Adrenal gland (tissue), 19 donors: ENCODE measurements at regions of chr5 and their contacts with region 1.

Region 1: GRCh38 chr5:134577796-134578363 is 52.4 kb downstream of the JADE2 start:
- DNase-seq: peak; percentile 76 to 92 (median 88)
- H3K4me3 ChIP-seq: no peak overlapping the region
- H3K27ac ChIP-seq: peak overlapping the region in 4 of 5 donors; percentile 22 to 91 (median 77)
- H3K4me1 ChIP-seq: peaks cover 14 to 51% of the 10 kb centered on the region in 2 donors
- H3K27me3 ChIP-seq: no peaks in the 10 kb centered on the region
- CTCF ChIP-seq: peak; percentile 78 to 87 (median 85)
- POLR2A ChIP-seq: no peak

Region 2: DNA sequence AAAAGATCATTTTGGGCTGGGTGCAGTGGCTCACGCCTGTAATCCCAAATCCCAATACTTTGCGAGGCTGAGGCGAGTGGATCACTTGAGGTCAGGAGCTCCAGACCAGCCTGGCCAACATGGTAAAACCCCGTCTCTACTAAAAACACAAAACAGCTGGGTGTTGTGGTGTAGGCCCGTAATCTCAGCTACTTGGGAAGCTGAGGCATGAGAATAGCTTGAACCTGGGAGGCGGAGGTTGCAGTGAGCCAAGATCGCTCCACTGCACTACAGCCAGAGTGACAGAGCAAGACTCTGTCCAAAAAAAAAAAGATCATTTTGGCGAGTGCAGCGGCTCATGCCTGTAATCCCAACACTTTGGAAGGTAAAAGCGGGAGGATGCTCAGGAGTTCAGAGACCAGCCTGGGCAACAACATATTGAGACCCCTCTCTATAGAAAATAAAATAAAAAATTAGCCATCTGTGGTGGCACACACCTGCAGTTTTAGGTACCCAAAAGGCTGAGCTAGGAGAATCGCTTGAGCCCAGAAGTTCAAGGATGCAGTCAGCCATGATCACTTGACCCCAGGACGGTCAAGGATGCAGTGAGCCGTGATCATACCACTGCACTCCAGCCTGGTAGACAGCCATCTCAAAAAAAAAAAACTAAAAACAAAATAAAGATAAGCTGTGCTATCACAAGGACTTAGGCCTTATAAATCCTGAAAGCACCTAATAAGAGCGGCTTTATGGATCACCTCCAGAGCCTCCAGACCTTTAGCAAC is 368.2 kb before region 1 on chr5:
- intact Hi-C with region 1: no loop called
- DNase-seq: peak in 1 of 7 donors; percentile 35
- H3K4me3 ChIP-seq: no peak overlapping the region
- H3K27ac ChIP-seq: peak overlapping the region in 1 of 5 donors; percentile 0
- H3K4me1 ChIP-seq: peaks cover 0 to 73% of the 10 kb centered on the region in 2 donors
- H3K27me3 ChIP-seq: no peaks in the 10 kb centered on the region
- CTCF ChIP-seq: no peak
- POLR2A ChIP-seq: no peak

Region 3: DNA sequence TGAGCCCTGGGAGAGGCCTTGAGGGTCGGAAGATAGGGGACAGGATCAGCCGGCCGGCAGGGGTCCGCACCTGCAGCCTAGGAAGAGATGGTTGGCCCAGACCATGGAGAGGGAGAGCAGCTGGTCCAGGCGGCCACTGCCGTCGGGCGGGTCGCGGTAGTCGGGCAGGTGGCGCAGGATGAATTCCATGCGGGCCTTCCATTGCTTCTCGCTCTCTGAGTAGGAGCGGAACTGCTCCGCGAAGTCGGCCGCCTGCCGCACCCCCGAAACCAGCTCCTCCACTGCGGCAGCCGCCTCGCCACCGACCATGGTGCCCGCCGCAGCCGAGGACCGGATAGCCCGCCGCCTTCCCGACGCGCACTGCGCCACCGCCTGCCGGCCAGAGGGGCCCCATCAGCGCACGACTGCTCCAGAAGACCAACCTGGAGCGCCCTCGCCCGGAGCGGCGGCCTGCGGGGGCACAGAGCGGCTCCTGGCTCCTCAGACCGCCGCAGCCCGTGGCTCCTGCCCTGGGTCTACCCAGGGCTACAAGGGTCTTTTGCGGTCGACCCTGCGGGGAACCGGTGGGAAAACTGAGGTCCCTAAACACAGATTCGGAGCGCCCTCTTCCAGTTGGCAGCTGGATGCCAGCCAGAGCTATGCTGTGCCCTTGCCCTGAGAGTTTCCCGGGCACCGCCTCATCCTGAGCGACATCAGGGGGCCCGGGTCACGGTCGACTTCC is 166.2 kb before region 1 on chr5 and contains the start of gene CDKN2AIPNL:
- intact Hi-C with region 1: loop called in 1 of 2 experiments (anchors 10 kb)
- DNase-seq: peak; percentile 89 to 93 (median 90)
- H3K4me3 ChIP-seq: peak within 1 kb of the TSS; percentile 16 to 90 (median 65)
- H3K27ac ChIP-seq: peak within 1 kb of the TSS; percentile 7 to 86 (median 66)
- H3K4me1 ChIP-seq: peaks cover 13 to 16% of the 10 kb centered on the region in 2 donors
- H3K27me3 ChIP-seq: no peaks in the 10 kb centered on the region
- CTCF ChIP-seq: peak; percentile 53 to 93 (median 72)
- POLR2A ChIP-seq: peak; percentile 38 to 48
- total RNA-seq, gene CDKN2AIPNL: 14.1 to 34.3 (median 29.0) TPM

Region 4: DNA sequence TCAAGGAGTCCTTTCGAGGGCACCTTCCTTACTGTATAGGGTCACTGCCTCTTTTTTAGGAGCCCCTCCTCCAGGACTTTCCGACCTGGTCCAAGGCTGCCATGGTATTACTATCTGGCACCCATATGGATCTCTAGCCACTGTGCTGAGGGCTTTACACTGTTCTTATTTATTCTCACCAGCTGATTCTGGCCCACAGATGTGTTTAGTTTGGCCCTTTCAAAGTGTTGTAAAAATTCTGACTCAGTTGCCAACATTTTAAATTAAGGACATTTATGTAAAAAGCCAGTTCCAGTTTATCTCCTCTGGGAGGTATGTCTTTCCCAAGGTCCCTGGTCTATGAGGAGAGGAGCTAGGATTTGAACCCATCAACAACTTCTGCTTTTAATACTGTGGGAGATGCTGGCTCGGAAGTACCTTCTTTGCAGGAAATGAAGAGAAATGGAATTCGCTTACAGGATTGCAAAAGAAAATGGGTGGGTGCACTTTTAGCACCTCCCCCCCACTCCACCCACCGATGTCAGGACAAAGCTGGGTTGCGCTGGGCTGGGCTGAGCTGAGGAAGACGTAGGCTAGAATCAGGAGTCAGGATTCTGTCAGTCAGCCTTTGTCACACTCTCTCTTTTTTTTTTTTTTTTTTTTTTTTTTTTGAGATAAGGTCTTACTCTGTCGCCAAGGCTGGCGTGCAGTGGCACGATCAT is 44.6 kb before region 1 on chr5:
- intact Hi-C with region 1: loop called in 1 of 2 experiments (anchors 5 kb)
- DNase-seq: peak; percentile 68 to 92 (median 85)
- H3K4me3 ChIP-seq: no peak overlapping the region
- H3K27ac ChIP-seq: peak overlapping the region; percentile 16 to 99 (median 57)
- H3K4me1 ChIP-seq: peaks cover 47 to 76% of the 10 kb centered on the region in 2 donors
- H3K27me3 ChIP-seq: no peaks in the 10 kb centered on the region
- CTCF ChIP-seq: no peak
- POLR2A ChIP-seq: no peak

Region 5: DNA sequence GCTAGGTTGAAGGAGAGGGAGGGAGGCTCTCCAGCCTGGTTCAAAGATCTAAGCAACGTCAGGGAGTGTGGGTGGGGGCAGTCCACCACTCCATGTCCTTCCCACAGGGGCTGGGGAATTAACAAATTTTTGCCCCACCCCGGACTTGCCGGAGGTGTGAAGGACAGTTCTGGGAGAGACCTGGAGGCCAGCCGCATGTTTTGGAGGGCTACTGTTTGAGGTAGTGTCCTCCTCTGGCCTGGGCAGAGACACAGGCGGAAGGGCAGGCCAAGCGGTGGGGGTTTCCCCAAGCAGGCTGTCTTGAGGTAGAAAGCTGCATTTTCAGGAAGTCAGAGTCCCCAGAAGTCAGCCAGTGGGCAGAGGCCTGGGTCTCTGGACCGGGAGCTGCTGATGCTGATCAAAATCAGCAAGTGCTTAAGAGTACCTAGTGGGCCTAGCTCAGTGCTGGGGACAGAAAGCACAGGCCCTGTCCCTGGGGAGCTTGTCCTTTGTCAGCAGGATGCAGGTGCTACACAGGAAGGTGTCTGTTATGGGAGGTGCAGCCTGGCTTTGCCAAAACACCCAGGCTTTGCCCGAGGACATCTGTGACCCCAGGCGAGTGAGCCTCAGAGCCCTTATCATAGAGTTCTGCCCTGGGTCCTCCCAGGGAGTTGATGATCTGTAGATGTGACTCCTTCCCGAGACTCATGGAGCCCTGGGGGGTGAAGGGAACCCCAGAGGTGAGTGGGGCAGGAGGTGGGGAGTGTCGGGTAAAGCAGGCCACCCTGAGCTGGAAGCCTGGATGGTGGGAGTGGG is 33.9 kb before region 1 on chr5:
- intact Hi-C with region 1: no loop called
- DNase-seq: no peak
- H3K4me3 ChIP-seq: no peak overlapping the region
- H3K27ac ChIP-seq: peak overlapping the region in 2 of 5 donors; percentile 62 to 72
- H3K4me1 ChIP-seq: peaks cover 22 to 49% of the 10 kb centered on the region in 2 donors
- H3K27me3 ChIP-seq: no peaks in the 10 kb centered on the region
- CTCF ChIP-seq: no peak
- POLR2A ChIP-seq: no peak